ENCODE measurements at regions of chr3 and their contacts with region 1.

Region 1: GRCh38 chr3:19891740-19892139 is 42.3 kb downstream of the EFHB start:
- DNase-seq: peak; percentile 38
- H3K4me3 Mint-ChIP-seq: no peak overlapping the region
- H3K27ac Mint-ChIP-seq: no peak overlapping the region
- H3K4me1 Mint-ChIP-seq: peaks cover 23% of the 10 kb centered on the region
- H3K27me3 Mint-ChIP-seq: no peaks in the 10 kb centered on the region
- CTCF ChIP-seq: no peak

Region 2: DNA sequence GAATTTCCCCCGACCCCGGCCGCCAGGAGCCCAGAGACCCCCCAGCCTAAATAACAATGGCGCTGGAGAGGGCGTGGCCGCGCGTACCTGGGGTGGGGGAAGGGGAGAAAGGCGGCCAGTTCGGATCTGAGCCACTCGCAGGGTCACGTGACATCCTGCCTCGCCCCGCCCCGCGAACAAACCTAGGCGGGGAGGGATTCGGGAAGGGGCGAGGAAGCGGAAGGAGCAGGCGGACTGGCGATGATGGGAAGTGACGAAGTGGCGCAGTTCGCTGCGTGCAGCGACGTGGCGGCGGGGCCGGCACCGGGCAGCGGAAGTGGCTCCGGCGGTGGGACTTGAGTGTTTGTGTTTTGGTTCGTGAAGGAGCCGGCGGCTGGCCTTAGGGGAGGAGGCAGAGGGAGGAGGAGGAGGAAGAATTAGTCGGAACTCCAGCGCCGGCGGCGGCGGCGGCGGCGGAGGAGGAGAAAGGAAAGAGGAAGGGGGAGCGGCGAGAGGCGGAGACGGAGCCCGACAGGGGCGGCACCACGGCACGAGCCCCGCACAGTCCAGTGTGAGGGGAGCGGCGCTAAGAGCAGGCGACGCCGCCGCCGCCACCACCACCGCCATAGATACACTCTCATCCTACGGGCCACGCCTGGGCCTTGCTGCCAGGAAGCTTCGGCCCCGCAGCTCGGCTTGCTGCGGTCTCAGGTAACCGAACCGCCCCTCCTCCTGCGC is 55.2 kb after region 1 on chr3 and contains the start of gene RAB5A:
- CTCF ChIA-PET with region 1: interaction called, 3 read pairs
- POLR2A ChIA-PET with region 1: interaction called, 15 read pairs
- intact Hi-C with region 1: loop called (anchors 1 kb)
- DNase-seq: peak; percentile 98
- H3K4me3 Mint-ChIP-seq: peak within 1 kb of the TSS; percentile 85
- H3K27ac Mint-ChIP-seq: peak within 1 kb of the TSS; percentile 98
- H3K4me1 Mint-ChIP-seq: peaks cover 13% of the 10 kb centered on the region
- H3K27me3 Mint-ChIP-seq: no peaks in the 10 kb centered on the region
- CTCF ChIP-seq: no peak
- total RNA-seq, gene RAB5A: 89.8 and 102 TPM in 2 replicates

Measured in MCF 10A (cell line).